PC-3 (cell line): ENCODE measurements at regions of chr14 and their contacts with region 1.

Region 1: GRCh38 chr14:23006544-23007419 is 3.2 kb downstream of the C14orf93 start:
- DNase-seq: peak; percentile 98
- ATAC-seq: peak; percentile 92
- H3K4me3 ChIP-seq: peak overlapping the region; percentile 73
- H3K27ac ChIP-seq: peak overlapping the region; percentile 90
- H3K4me1 ChIP-seq: peaks cover 40% of the 10 kb centered on the region
- H3K27me3 ChIP-seq: no peaks in the 10 kb centered on the region
- CTCF ChIP-seq: peak; percentile 36; the same call in 1 of the 2 replicates

Region 2: DNA sequence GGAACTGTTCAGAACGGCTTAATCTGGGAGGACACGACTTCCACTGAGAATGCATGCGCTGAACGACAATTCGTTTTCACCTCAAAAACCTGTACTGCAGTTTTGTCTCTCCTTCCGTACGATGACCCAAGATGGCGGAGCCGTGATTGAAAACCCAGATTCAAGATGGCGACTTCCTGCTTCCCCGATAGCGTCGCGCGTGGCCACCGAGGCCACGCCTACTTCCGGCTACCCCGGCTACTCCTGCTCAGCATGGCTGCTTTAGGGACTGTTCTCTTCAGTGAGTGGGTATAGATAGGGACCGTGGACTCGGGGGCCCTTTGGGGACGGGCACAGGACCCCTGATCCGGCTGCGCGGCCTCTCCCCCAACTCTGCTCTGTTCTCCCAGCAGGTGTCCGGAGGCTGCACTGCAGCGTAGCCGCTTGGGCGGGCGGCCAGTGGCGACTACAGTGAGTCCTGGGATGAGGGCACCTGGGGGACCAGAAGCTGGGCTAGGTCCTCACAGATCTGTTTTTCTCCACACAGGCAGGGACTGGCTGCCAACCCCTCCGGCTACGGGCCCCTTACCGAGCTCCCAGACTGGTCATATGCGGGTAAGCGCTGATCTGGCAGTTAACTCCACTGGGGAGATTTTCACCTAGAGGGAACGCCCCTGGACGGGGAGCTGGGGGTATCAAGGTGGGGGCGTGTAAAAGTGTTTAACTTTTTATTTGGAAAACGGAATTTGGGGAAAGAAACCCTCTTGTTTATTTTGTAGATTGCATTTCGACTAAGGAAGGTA is 176.9 kb before region 1 on chr14 and contains the start of gene MRPL52:
- CTCF ChIA-PET with region 1: no interaction called
- POLR2A ChIA-PET with region 1: interaction called, 10 read pairs
- intact Hi-C with region 1: no loop called
- DNase-seq: peak; percentile 92
- ATAC-seq: peak; percentile 92
- H3K4me3 ChIP-seq: peak within 1 kb of the TSS; percentile 96
- H3K27ac ChIP-seq: peak within 1 kb of the TSS; percentile 17
- H3K4me1 ChIP-seq: peaks cover 17% of the 10 kb centered on the region
- H3K27me3 ChIP-seq: no peaks in the 10 kb centered on the region
- CTCF ChIP-seq: no peak
- total RNA-seq, gene MRPL52: 114 and 180 TPM in 2 replicates

Region 3: DNA sequence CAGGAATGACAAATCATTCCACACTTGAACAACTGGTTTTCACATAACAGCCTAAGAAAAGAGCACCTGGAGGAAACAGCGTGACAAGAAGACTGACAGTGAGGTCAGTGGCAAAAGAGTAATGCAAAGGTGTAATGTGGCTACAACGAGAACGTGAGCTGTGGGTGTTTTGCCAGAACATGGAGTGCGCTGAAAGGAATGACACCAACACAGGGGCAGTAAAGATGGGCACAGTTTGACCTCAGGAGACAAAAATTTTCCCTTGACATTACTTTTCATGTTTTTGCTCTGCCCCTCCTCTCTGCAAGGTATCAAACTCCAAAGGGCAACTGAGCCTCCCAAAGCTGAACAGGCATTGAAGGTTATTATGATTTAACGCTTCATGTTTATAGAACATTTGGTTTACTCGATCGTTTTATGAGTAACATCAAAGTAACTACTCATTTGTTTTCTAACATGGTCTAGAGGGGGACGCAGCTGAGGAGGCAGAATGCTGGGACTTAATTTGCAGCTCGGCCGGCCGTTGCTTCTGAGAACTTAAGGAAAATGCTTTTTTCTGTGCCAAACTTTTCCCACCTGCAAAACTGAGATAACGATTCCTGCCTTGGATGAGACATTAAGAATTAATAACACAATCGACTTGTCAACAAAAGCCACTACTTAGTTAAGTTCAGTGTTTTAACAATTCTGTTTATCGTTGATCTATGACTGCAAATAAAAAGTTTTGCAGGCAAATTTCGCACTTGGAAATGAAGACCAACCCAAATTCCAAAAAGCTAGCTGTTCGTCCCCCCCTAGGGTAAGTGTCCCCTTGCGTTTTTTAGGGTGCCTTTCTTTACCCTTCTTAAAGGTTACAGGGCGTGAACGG is 50.8 kb before region 1 on chr14:
- CTCF ChIA-PET with region 1: no interaction called
- POLR2A ChIA-PET with region 1: interaction called, 12 read pairs
- intact Hi-C with region 1: no loop called
- DNase-seq: peak; percentile 70
- ATAC-seq: no peak
- H3K4me3 ChIP-seq: peak overlapping the region; percentile 84
- H3K27ac ChIP-seq: peak overlapping the region; percentile 78
- H3K4me1 ChIP-seq: peaks cover 12% of the 10 kb centered on the region
- H3K27me3 ChIP-seq: no peaks in the 10 kb centered on the region
- CTCF ChIP-seq: no peak

Region 4: GRCh38 chr14:23034483-23035302 is 27.9 kb after region 1 on chr14 and contains the start of gene PSMB5:
- CTCF ChIA-PET with region 1: no interaction called
- POLR2A ChIA-PET with region 1: no interaction called
- intact Hi-C with region 1: loop called (anchors 1 kb)
- DNase-seq: peak; percentile 95
- ATAC-seq: peak; percentile 96
- H3K4me3 ChIP-seq: peak within 1 kb of the TSS; percentile 89
- H3K27ac ChIP-seq: peak within 1 kb of the TSS; percentile 88
- H3K4me1 ChIP-seq: peaks cover 20% of the 10 kb centered on the region
- H3K27me3 ChIP-seq: no peaks in the 10 kb centered on the region
- CTCF ChIP-seq: no peak
- total RNA-seq, gene PSMB5: 368 and 424 TPM in 2 replicates